ENCODE measurements at regions of chr12 and their contacts with region 1.

Region 1: DNA sequence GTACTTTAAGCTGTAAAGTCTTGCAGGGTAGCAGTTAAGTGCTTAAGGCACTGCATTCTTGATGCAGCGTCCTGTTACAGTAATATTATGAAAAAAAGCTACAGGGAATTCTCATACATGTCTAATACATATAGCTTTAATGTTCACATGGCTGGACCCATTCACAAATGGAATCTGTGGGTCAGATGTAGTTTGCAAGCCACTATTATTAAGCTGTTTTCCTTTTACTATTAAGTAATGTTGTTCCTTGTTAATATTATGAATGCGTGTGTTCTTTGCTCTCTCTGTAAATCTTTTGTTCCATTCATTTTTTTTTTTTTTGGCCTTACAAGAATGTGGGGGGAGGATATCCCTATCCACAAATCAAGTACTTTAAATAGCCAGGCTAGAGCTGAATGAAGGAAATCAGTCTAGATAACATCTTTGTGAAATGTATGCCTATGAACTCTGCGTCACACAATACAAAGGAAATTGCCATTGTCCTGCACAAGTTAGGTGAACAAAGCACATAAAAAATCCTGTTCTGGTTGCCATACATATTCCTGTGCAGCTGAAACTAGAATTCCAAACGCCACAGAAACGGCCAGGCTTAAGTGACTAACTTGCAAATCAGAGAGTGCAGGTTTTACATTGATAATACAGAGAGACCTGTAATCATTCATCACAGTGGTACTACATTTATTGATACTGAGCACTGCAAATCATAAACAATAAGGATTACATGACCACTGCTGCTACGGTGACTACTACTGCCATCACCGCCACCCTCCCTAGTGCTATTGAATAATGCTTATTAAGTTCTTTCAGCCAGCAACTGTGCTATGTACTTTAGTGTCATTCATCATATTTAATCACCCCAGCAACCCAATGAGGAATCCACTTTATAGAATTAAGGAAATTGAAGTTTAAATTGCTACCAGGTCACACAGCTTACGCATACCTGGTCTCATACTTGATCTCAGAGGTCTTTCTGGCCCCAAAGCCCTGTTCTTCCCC is 111.9 kb downstream of the HMGA2 start:
- DNase-seq: no peak
- ATAC-seq: peak; percentile 9; the same call in 1 of the 2 replicates
- H3K4me3 ChIP-seq: no peak overlapping the region
- H3K27ac ChIP-seq: no peak overlapping the region; the same call in 1 of the 2 replicates
- H3K4me1 ChIP-seq: peaks cover 31% of the 10 kb centered on the region
- H3K27me3 ChIP-seq: no peaks in the 10 kb centered on the region
- CTCF ChIP-seq: no peak

Region 2: DNA sequence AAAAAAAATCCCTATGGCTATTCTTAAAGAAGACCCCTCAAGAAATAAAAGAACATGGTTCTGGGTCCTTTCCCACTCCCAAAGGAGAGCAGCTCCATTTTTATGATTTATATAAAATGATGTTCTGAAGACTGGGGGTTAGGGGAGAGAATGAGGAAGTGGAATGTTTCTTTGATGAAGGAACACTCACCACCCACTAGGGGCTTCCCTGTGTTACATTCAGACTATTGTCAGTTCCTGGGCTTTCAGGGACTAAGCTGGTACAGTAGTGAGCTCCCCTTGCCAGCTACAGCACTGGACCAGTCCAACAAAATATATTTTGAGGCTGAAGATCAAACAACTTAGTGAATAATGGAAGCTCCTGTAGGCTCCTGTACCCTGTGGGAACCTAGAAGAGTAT is 13.0 kb before region 1 on chr12:
- CTCF ChIA-PET with region 1: interaction called, 4 read pairs
- POLR2A ChIA-PET with region 1: interaction called, 10 read pairs
- intact Hi-C with region 1: no loop called
- DNase-seq: no peak
- ATAC-seq: 0 out of 2 replicates have a peak, but pooled peaks have one; percentile 11
- H3K4me3 ChIP-seq: no peak overlapping the region
- H3K27ac ChIP-seq: no peak overlapping the region; the same call in 1 of the 2 replicates
- H3K4me1 ChIP-seq: peaks cover 13% of the 10 kb centered on the region
- H3K27me3 ChIP-seq: no peaks in the 10 kb centered on the region
- CTCF ChIP-seq: peak; percentile 37

Region 3: DNA sequence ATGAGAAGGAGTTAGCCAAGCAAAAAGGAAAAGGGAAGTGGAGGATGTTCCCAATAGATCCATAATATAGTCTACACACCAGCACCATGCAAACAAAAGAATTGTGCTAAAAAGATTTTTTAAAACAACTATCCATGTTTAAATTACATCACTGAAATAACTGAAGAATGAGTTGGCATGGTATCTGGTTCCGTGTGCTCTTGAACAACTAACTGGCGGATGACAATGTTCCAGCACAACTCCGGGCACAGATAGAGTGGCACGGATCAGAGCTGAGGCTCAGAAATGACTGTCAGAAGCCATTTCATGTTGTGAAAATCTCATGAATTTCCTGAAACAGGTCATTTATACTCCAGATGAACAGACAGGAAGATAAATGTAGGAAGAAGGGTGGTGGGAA is 41.2 kb after region 1 on chr12:
- CTCF ChIA-PET with region 1: no interaction called
- POLR2A ChIA-PET with region 1: no interaction called
- intact Hi-C with region 1: no loop called
- DNase-seq: no peak
- ATAC-seq: no peak
- H3K4me3 ChIP-seq: no peak overlapping the region
- H3K27ac ChIP-seq: no peak overlapping the region
- H3K4me1 ChIP-seq: no peaks in the 10 kb centered on the region
- H3K27me3 ChIP-seq: no peaks in the 10 kb centered on the region
- CTCF ChIP-seq: no peak

Region 4: GRCh38 chr12:66011731-66012130 is 75.5 kb after region 1 on chr12:
- CTCF ChIA-PET with region 1: no interaction called
- POLR2A ChIA-PET with region 1: no interaction called
- intact Hi-C with region 1: no loop called
- DNase-seq: no peak
- ATAC-seq: no peak
- H3K4me3 ChIP-seq: no peak overlapping the region
- H3K27ac ChIP-seq: no peak overlapping the region
- H3K4me1 ChIP-seq: peaks cover 9% of the 10 kb centered on the region; the same call in 1 of the 2 replicates
- H3K27me3 ChIP-seq: no peaks in the 10 kb centered on the region
- CTCF ChIP-seq: no peak

Region 5: GRCh38 chr12:66025477-66025876 is 89.3 kb after region 1 on chr12:
- CTCF ChIA-PET with region 1: no interaction called
- POLR2A ChIA-PET with region 1: no interaction called
- intact Hi-C with region 1: no loop called
- DNase-seq: no peak
- ATAC-seq: no peak
- H3K4me3 ChIP-seq: no peak overlapping the region
- H3K27ac ChIP-seq: no peak overlapping the region
- H3K4me1 ChIP-seq: no peaks in the 10 kb centered on the region
- H3K27me3 ChIP-seq: no peaks in the 10 kb centered on the region
- CTCF ChIP-seq: no peak